CD8-positive, alpha-beta T cell (primary cell): ENCODE measurements at regions of chr3 and their contacts with region 1.

Region 1: DNA sequence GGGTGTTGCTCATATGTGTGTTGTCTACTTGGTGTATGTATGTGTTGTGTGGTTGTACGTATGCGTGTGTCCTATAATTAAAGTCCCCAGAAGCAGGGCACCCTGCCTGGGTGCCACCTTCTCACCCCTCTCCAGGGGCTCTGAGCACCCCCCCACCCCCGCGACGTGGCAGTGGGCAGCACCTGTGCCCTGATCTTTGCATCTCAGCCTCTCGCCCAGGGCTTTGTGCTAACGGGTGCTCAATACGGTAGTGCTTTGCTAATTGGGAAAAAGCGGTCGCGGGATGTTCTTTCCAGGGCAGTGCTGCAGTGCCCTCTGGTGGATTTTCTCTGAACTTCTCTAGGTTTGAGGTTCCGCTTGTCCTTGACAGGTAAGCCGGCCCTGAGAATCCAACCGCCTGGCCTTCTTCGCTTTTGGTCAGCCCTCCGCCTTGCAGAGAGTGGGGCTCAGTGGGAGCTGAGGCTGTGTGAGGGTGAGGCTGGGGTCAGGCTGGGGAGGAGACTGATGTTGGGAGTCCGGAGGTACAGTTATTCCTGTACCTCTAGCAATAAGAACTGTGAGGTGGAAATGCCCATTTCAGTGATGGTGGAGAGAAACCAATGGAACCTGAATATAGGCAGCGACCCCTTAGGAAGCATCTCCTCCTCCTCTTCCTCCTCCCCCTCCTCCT is 17.6 kb upstream of the EPHB3 start:
- DNase-seq: peak; percentile 54 to 83 (median 74)
- ATAC-seq: peak; percentile 81
- H3K4me3 ChIP-seq: no peak overlapping the region
- H3K4me3 Mint-ChIP-seq: no peak overlapping the region
- H3K27ac ChIP-seq: no peak overlapping the region
- H3K27ac Mint-ChIP-seq: no peak overlapping the region
- H3K4me1 ChIP-seq: peaks cover 9% of the 10 kb centered on the region
- H3K4me1 Mint-ChIP-seq: peaks cover 13% of the 10 kb centered on the region
- H3K27me3 ChIP-seq: peaks cover 0 to 5% of the 10 kb centered on the region in 2 experiments
- H3K27me3 Mint-ChIP-seq: peaks cover 30% of the 10 kb centered on the region
- CTCF ChIP-seq: peak; percentile 87

Region 2: GRCh38 chr3:184229394-184230080 is 314.4 kb before region 1 on chr3 and contains the start of gene VWA5B2:
- CTCF ChIA-PET with region 1: interaction called, 4 read pairs
- POLR2A ChIA-PET with region 1: no interaction called
- intact Hi-C with region 1: loop called (anchors 1 to 5 kb)
- DNase-seq: peak; percentile 54 to 89 (median 75)
- ATAC-seq: peak; percentile 97
- H3K4me3 ChIP-seq: peak within 1 kb of the TSS; percentile 52 to 80
- H3K4me3 Mint-ChIP-seq: peak within 1 kb of the TSS; percentile 76
- H3K27ac ChIP-seq: no peak within 1 kb of the TSS
- H3K27ac Mint-ChIP-seq: no peak within 1 kb of the TSS
- H3K4me1 ChIP-seq: peaks cover 14% of the 10 kb centered on the region
- H3K4me1 Mint-ChIP-seq: peaks cover 14% of the 10 kb centered on the region
- H3K27me3 ChIP-seq: peaks cover 21 to 31% of the 10 kb centered on the region in 2 experiments
- H3K27me3 Mint-ChIP-seq: peaks cover 49% of the 10 kb centered on the region
- CTCF ChIP-seq: peak; percentile 35
- total RNA-seq, gene VWA5B2: 0.28 to 0.65 TPM

Region 3: DNA sequence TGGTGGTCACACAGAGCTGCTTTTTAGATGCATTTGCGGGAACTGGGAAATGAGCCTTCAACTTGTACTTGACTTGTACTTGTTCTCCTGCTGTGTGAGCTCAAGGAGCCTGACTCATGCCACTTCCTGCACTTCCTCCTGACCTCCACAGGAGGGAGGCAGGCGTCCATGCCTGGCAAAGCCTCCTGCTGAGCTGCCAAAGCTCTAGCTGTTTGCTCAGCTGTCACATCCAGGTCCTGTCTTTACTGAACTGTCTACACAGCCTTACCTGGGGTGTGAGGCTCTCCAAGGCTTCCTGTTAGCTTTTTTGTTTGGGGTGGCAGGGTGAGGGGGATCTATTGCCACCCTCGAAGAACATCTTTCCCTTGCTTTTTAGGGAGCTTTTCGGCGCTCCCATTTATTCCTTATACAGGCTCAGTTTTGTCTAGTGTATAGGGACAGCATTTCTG is 172.4 kb before region 1 on chr3:
- CTCF ChIA-PET with region 1: interaction called, 47 read pairs
- POLR2A ChIA-PET with region 1: no interaction called
- intact Hi-C with region 1: loop called (anchors 1 kb)
- DNase-seq: peak; percentile 29 to 74 (median 54)
- ATAC-seq: peak; percentile 99
- H3K4me3 ChIP-seq: no peak overlapping the region
- H3K4me3 Mint-ChIP-seq: no peak overlapping the region
- H3K27ac ChIP-seq: no peak overlapping the region
- H3K27ac Mint-ChIP-seq: no peak overlapping the region
- H3K4me1 ChIP-seq: no peaks in the 10 kb centered on the region
- H3K4me1 Mint-ChIP-seq: peaks cover 4% of the 10 kb centered on the region
- H3K27me3 ChIP-seq: no peaks in the 10 kb centered on the region
- H3K27me3 Mint-ChIP-seq: peaks cover 2% of the 10 kb centered on the region
- CTCF ChIP-seq: peak; percentile 74

Region 4: DNA sequence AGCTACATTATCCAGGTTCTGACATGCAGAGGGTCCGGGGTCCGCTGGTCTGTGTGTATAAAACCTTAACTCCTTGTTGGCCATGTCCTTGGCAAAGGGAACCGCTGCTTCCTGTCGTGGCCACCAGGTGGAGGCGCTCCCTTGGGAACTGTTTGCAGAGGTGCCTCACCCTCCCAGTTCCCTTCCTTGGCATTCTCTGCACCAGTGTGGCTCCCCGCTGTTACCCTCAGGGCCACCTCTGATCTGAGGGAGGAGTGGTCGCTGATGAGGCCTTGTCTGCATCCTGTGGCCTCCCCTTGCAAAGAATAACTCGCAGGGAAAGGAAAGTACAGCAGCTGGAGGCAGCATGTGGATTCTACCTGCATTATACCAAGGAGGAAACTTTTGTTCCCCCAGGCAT is 74.6 kb before region 1 on chr3:
- CTCF ChIA-PET with region 1: no interaction called
- POLR2A ChIA-PET with region 1: no interaction called
- intact Hi-C with region 1: loop called in 1 of 2 experiments (anchors 2 kb)
- DNase-seq: peak in 1 of 9 experiments; percentile 12
- ATAC-seq: no peak
- H3K4me3 ChIP-seq: no peak overlapping the region
- H3K4me3 Mint-ChIP-seq: no peak overlapping the region
- H3K27ac ChIP-seq: no peak overlapping the region
- H3K27ac Mint-ChIP-seq: no peak overlapping the region
- H3K4me1 ChIP-seq: no peaks in the 10 kb centered on the region
- H3K4me1 Mint-ChIP-seq: peaks cover 7% of the 10 kb centered on the region
- H3K27me3 ChIP-seq: peaks cover 0 to 5% of the 10 kb centered on the region in 2 experiments
- H3K27me3 Mint-ChIP-seq: peaks cover 18% of the 10 kb centered on the region
- CTCF ChIP-seq: no peak

Region 5: GRCh38 chr3:184523825-184524615 is 20.0 kb before region 1 on chr3:
- CTCF ChIA-PET with region 1: interaction called, 40 read pairs
- POLR2A ChIA-PET with region 1: no interaction called
- intact Hi-C with region 1: no loop called
- DNase-seq: peak in 2 of 9 experiments; percentile 21 to 29
- ATAC-seq: no peak
- H3K4me3 ChIP-seq: no peak overlapping the region
- H3K4me3 Mint-ChIP-seq: no peak overlapping the region
- H3K27ac ChIP-seq: no peak overlapping the region
- H3K27ac Mint-ChIP-seq: no peak overlapping the region
- H3K4me1 ChIP-seq: peaks cover 13% of the 10 kb centered on the region
- H3K4me1 Mint-ChIP-seq: peaks cover 14% of the 10 kb centered on the region
- H3K27me3 ChIP-seq: peaks cover 0 to 12% of the 10 kb centered on the region in 2 experiments
- H3K27me3 Mint-ChIP-seq: peaks cover 30% of the 10 kb centered on the region
- CTCF ChIP-seq: no peak

Region 6: GRCh38 chr3:184561061-184561912 is 17.3 kb after region 1 on chr3 and contains the start of gene EPHB3:
- CTCF ChIA-PET with region 1: interaction called, 31 read pairs
- POLR2A ChIA-PET with region 1: interaction called, 3 read pairs
- intact Hi-C with region 1: no loop called
- DNase-seq: peak; percentile 80 to 93 (median 91)
- ATAC-seq: peak; percentile 86
- H3K4me3 ChIP-seq: peak within 1 kb of the TSS; percentile 42 to 43
- H3K4me3 Mint-ChIP-seq: peak within 1 kb of the TSS; percentile 70
- H3K27ac ChIP-seq: no peak within 1 kb of the TSS
- H3K27ac Mint-ChIP-seq: peak within 1 kb of the TSS; percentile 8
- H3K4me1 ChIP-seq: peaks cover 47% of the 10 kb centered on the region
- H3K4me1 Mint-ChIP-seq: peaks cover 43% of the 10 kb centered on the region
- H3K27me3 ChIP-seq: peaks cover 6 to 22% of the 10 kb centered on the region in 2 experiments
- H3K27me3 Mint-ChIP-seq: peaks cover 38% of the 10 kb centered on the region
- CTCF ChIP-seq: peak; percentile 94
- total RNA-seq, gene EPHB3: not detected

Region 7: DNA sequence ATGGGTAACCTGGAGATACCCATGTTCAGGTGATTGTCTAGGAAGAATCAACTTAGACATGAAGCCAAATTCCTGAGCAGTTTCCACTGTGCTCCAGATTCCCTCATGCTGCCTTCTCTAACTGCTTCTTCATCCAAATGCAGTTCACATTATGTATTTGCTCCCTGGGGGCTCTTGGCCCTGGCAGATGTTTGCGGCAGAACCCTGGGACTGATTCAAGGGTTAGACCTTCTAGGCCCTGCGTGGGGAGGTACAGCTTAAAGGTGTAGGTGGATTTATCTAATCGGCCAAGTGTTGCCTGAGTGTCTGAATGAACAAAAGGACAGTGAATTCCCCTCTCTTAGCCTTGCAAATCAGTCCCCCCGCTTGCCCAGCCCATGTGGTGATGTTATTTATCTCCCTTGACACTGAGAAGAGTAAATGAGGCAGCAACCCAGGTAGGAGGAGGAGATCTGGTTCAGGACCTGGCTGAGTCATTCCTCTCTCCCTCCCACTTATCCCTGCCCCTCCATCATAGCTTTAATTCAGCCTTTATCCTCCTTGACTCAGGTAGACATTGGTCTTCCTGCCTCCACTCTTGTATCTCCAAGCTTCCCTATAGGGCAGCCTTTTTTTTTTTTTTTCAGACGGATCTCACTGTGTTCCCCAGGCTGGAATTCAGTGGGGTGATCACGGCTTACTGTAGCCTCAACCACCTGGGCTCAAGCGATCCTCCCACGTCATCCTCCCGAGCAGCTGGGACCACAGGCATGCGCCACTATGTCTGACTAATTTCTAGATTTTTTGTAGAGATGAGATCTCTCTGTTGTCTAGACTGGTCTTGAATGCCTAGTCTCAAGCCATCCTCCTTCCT is 113.1 kb after region 1 on chr3:
- CTCF ChIA-PET with region 1: no interaction called
- POLR2A ChIA-PET with region 1: no interaction called
- intact Hi-C with region 1: no loop called
- DNase-seq: no peak
- ATAC-seq: no peak
- H3K4me3 ChIP-seq: no peak overlapping the region
- H3K4me3 Mint-ChIP-seq: no peak overlapping the region
- H3K27ac ChIP-seq: no peak overlapping the region
- H3K27ac Mint-ChIP-seq: no peak overlapping the region
- H3K4me1 ChIP-seq: no peaks in the 10 kb centered on the region
- H3K4me1 Mint-ChIP-seq: peaks cover 5% of the 10 kb centered on the region
- H3K27me3 ChIP-seq: no peaks in the 10 kb centered on the region
- H3K27me3 Mint-ChIP-seq: no peaks in the 10 kb centered on the region
- CTCF ChIP-seq: no peak